Activated CD4-positive, alpha-beta memory T cell treated with anti-CD3 and anti-CD28 coated beads for 36 hours (primary cell): ENCODE measurements at regions of chr9 and their contacts with region 1.

Region 1: GRCh38 chr9:5364294-5365024 is 24.8 kb upstream of the RLN1 start:
- DNase-seq: no peak
- H3K4me3 Mint-ChIP-seq: no peak overlapping the region
- H3K27ac Mint-ChIP-seq: peak overlapping the region; percentile 59
- H3K4me1 Mint-ChIP-seq: peaks cover 21% of the 10 kb centered on the region
- H3K27me3 Mint-ChIP-seq: no peaks in the 10 kb centered on the region

Region 2: GRCh38 chr9:5389109-5389732 is 24.8 kb after region 1 on chr9:
- CTCF ChIA-PET with region 1: no interaction called
- POLR2A ChIA-PET with region 1: no interaction called
- intact Hi-C with region 1: loop called (anchors 1 kb)
- DNase-seq: peak; percentile 71
- H3K4me3 Mint-ChIP-seq: no peak overlapping the region
- H3K27ac Mint-ChIP-seq: peak overlapping the region; percentile 14
- H3K4me1 Mint-ChIP-seq: peaks cover 20% of the 10 kb centered on the region
- H3K27me3 Mint-ChIP-seq: no peaks in the 10 kb centered on the region

Region 3: GRCh38 chr9:5510360-5510931 is 146.0 kb after region 1 on chr9 and contains the start of gene PDCD1LG2:
- CTCF ChIA-PET with region 1: no interaction called
- POLR2A ChIA-PET with region 1: no interaction called
- intact Hi-C with region 1: no loop called
- DNase-seq: peak; percentile 82
- H3K4me3 Mint-ChIP-seq: peak within 1 kb of the TSS; percentile 73
- H3K27ac Mint-ChIP-seq: peak within 1 kb of the TSS; percentile 90
- H3K4me1 Mint-ChIP-seq: peaks cover 51% of the 10 kb centered on the region
- H3K27me3 Mint-ChIP-seq: no peaks in the 10 kb centered on the region
- total RNA-seq, gene PDCD1LG2: 0.73 to 0.83 TPM